Cardiac septum (tissue), 1 donor: ENCODE measurements at regions of chr19 and their contacts with region 1.

Region 1: DNA sequence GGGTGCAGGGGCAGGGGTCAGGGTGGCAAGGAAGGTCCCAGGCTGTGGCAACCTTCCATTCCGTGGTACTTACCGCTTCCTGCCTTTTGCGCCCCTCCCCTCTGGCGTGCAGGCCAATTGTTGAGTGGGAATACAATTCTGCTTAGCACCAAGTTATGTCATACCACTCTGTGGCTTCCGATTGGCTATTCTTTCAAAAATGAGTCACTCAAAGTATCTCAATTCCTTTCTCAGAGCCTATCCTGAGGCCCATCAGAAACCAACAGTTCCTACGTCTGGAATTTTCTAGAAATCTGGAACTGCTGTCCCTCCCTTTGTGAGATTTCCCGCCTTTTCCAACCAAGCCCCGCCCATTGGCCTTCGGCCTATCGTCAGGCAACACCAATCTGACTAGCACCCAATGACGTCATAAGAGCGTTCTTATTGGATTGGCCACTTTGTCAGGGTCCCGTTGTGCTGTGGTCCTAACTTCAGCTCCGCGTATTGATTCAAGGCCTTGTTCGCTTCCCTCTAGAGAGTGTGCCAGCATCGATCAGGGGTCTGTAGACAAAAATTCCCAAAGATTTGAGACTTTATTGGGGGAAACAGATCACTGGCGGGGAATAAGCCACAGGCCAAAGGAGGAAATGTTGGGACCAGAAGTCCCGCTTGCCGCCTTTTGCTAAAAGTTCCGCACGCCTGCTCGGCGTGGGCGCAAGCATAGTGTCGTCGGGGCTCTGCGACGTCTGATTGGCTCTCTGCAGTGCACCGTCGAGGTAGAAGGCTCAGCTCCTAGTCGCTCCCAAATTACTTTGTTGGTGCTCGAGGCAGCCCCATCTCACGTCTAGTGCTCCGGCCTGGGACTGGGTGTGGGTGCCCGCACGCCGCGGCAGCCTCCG is 11.7 kb downstream of the NTN5 start:
- DNase-seq: peak; percentile 91

Region 2: DNA sequence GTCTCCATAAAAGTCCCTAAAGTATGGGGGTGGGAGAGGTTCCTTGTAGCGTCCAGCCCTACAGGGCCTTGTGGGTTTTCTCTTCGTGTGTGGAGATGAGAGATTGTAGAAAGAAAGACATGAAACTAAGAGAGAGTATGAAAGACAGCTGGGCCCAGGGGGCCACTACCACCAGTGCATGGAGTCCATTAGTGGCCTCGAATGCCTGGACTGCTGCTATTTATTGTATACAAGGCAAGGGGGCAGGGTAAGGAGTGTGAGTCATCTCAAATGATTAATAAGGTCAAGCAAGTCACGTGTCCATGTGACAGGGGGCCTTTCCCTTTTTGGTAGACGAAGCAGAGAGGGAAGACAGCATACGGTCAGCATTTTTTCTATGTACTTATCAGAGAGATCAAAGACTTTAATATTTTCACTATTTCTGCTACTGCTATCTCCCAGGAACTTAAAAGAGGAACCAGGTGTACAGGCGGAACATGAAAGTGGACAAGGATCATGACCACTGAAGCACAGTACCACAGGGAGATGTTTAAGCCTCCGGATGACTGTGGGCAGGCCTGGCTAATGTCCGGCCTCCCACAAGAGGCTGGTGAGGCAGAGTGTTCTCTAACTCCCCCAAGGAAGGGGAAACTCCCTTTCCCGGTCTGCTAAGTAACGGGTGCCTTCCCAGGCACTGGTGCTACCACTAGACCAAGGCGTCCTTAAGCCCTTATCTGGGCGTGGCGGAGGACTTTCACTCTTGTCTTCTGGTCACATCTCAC is 119.7 kb after region 1 on chr19:
- intact Hi-C with region 1: loop called (anchors 5 kb)
- DNase-seq: no peak